GM12878 (cell line): ENCODE measurements at regions of chr9 and their contacts with region 1.

Region 1: GRCh38 chr9:97890038-97890437 is 32.3 kb downstream of the TRMO start:
- DNase-seq: no peak
- ATAC-seq: peak; percentile 86
- H3K4me3 ChIP-seq: no peak overlapping the region
- H3K27ac ChIP-seq: no peak overlapping the region
- H3K4me1 ChIP-seq: no peaks in the 10 kb centered on the region
- H3K27me3 ChIP-seq: no peaks in the 10 kb centered on the region
- CTCF ChIP-seq: peak; percentile 59 to 88 (median 83)
- EP300 ChIP-seq: no peak
- POLR2A ChIP-seq: no peak
- RAD21 ChIP-seq: peak; percentile 51

Region 2: DNA sequence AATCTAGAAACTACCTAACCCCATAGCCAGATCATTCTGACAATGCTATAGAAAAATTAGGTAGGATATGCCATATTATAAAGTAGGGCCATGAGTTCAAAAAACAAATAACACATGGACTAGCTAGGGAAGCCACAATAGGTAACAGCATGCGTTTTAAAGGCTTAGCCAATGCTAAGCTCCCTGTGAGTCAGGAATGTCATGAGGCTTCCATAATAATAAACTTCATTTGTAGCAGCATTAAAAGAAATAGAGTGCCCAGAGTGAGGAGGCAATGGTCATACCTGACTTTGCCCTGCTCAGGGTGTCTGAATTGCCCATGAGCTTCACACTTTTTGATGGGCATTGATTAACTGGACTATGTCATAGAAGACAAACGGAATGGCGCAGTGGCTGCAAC is 21.2 kb before region 1 on chr9:
- CTCF ChIA-PET with region 1: interaction called, 11 read pairs
- POLR2A ChIA-PET with region 1: no interaction called
- RAD21 ChIA-PET with region 1: interaction called, 3 read pairs
- SMC1A ChIA-PET with region 1: interaction called, 3 read pairs
- in situ Hi-C with region 1: no loop called
- intact Hi-C with region 1: no loop called
- DNase-seq: no peak
- ATAC-seq: no peak
- H3K4me3 ChIP-seq: no peak overlapping the region
- H3K27ac ChIP-seq: no peak overlapping the region
- H3K4me1 ChIP-seq: peaks cover 6% of the 10 kb centered on the region; the same call in 1 of the 2 replicates
- H3K27me3 ChIP-seq: peaks cover 0 to 2% of the 10 kb centered on the region in 2 experiments; a peak in 1 of 4 replicates
- CTCF ChIP-seq: no peak
- EP300 ChIP-seq: no peak
- POLR2A ChIP-seq: no peak
- RAD21 ChIP-seq: no peak

Region 3: DNA sequence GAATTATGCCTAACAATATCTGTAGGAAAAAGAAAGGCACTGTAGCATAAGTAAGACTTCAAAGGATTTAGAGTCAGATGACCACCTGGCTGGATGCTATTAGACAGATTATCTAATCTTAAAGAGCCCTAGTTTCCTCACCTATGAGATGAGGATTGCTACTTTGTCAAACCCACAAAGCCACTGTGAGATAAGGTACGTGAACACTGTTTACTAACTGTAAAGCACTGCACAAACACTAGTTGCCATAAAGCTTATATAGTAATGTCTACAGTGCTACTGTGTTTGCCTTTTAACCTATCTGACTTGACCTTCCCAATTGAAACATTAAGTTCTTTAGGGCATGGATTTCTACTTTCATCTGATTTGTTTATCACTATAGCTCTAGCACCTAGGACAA is 21.9 kb after region 1 on chr9:
- CTCF ChIA-PET with region 1: interaction called, 14 read pairs
- POLR2A ChIA-PET with region 1: no interaction called
- RAD21 ChIA-PET with region 1: no interaction called
- SMC1A ChIA-PET with region 1: no interaction called
- in situ Hi-C with region 1: no loop called
- intact Hi-C with region 1: no loop called
- DNase-seq: no peak
- ATAC-seq: no peak
- H3K4me3 ChIP-seq: no peak overlapping the region
- H3K27ac ChIP-seq: no peak overlapping the region
- H3K4me1 ChIP-seq: peaks cover 3% of the 10 kb centered on the region; the same call in 1 of the 2 replicates
- H3K27me3 ChIP-seq: no peaks in the 10 kb centered on the region
- CTCF ChIP-seq: no peak
- EP300 ChIP-seq: no peak
- POLR2A ChIP-seq: no peak
- RAD21 ChIP-seq: no peak

Region 4: GRCh38 chr9:97934321-97935115 is 44.5 kb after region 1 on chr9:
- CTCF ChIA-PET with region 1: no interaction called
- POLR2A ChIA-PET with region 1: no interaction called
- RAD21 ChIA-PET with region 1: no interaction called
- SMC1A ChIA-PET with region 1: no interaction called
- in situ Hi-C with region 1: no loop called
- intact Hi-C with region 1: no loop called
- DNase-seq: no peak
- ATAC-seq: 0 out of 3 replicates have a peak, but pooled peaks have one; percentile 16
- H3K4me3 ChIP-seq: no peak overlapping the region
- H3K27ac ChIP-seq: no peak overlapping the region
- H3K4me1 ChIP-seq: peaks cover 7% of the 10 kb centered on the region; the same call in 1 of the 2 replicates
- H3K27me3 ChIP-seq: no peaks in the 10 kb centered on the region
- CTCF ChIP-seq: no peak
- EP300 ChIP-seq: no peak
- POLR2A ChIP-seq: no peak
- RAD21 ChIP-seq: no peak

Region 5: GRCh38 chr9:98074115-98074990 is 184.3 kb after region 1 on chr9:
- CTCF ChIA-PET with region 1: no interaction called
- POLR2A ChIA-PET with region 1: no interaction called
- RAD21 ChIA-PET with region 1: no interaction called
- SMC1A ChIA-PET with region 1: no interaction called
- in situ Hi-C with region 1: no loop called
- intact Hi-C with region 1: no loop called
- DNase-seq: no peak
- ATAC-seq: peak; percentile 81
- H3K4me3 ChIP-seq: no peak overlapping the region
- H3K27ac ChIP-seq: no peak overlapping the region
- H3K4me1 ChIP-seq: no peaks in the 10 kb centered on the region
- H3K27me3 ChIP-seq: no peaks in the 10 kb centered on the region
- CTCF ChIP-seq: peak; percentile 85 to 95 (median 94)
- EP300 ChIP-seq: no peak
- POLR2A ChIP-seq: no peak
- RAD21 ChIP-seq: peak; percentile 90

Region 6: DNA sequence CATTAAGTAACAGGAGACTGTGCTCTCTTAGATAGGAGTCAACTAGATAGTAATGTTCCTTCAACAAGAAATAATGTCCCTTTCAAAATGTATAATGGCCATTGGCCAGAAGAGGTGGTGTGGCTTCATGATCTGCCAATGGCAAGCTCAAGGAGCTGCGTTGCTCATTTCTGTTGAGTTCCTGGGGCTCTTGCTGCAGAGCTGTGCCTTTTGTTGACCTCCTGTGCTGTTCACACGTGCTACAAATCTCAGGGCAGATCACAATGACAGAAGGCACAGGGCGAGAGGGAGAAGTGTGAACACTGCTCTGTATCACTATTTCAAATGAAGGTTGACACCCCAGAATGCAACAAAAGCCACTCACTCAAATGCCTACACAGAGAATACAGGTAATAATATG is 381.4 kb after region 1 on chr9:
- CTCF ChIA-PET with region 1: no interaction called
- POLR2A ChIA-PET with region 1: no interaction called
- RAD21 ChIA-PET with region 1: no interaction called
- SMC1A ChIA-PET with region 1: no interaction called
- in situ Hi-C with region 1: no loop called
- intact Hi-C with region 1: no loop called
- DNase-seq: no peak
- ATAC-seq: no peak; the same call in 2 of the 3 replicates
- H3K4me3 ChIP-seq: no peak overlapping the region
- H3K27ac ChIP-seq: no peak overlapping the region
- H3K4me1 ChIP-seq: no peaks in the 10 kb centered on the region
- H3K27me3 ChIP-seq: peaks cover 0 to 4% of the 10 kb centered on the region in 2 experiments; a peak in 1 of 4 replicates
- CTCF ChIP-seq: no peak
- EP300 ChIP-seq: no peak
- POLR2A ChIP-seq: no peak
- RAD21 ChIP-seq: no peak